SK-N-SH (cell line): ENCODE measurements at regions of chr3 and their contacts with region 1.

Region 1: GRCh38 chr3:185070491-185071286 is 82.2 kb downstream of the C3orf70 start:
- DNase-seq: peak; percentile 72
- H3K4me3 ChIP-seq: no peak overlapping the region
- H3K27ac ChIP-seq: no peak overlapping the region; a peak in 1 of 4 replicates
- H3K4me1 ChIP-seq: peaks cover 0 to 11% of the 10 kb centered on the region in 2 experiments; a peak in 1 of 4 replicates
- H3K27me3 ChIP-seq: no peaks in the 10 kb centered on the region; the same call in 1 of the 2 replicates
- CTCF ChIP-seq: peak; percentile 21; the same call in 1 of the 2 replicates
- EP300 ChIP-seq: no peak
- RAD21 ChIP-seq: peak; percentile 53

Region 2: GRCh38 chr3:185042312-185043050 is 28.2 kb before region 1 on chr3:
- CTCF ChIA-PET with region 1: interaction called, 11 read pairs
- POLR2A ChIA-PET with region 1: no interaction called
- DNase-seq: no peak
- H3K4me3 ChIP-seq: no peak overlapping the region
- H3K27ac ChIP-seq: no peak overlapping the region
- H3K4me1 ChIP-seq: peaks cover 0 to 13% of the 10 kb centered on the region in 2 experiments; a peak in 2 of 4 replicates
- H3K27me3 ChIP-seq: no peaks in the 10 kb centered on the region
- CTCF ChIP-seq: no peak
- EP300 ChIP-seq: no peak
- RAD21 ChIP-seq: no peak